Natural killer cell (primary cell): ENCODE measurements at regions of chr20 and their contacts with region 1.

Region 1: GRCh38 chr20:53609491-53610445 is 16.1 kb upstream of the ZNF217 start:
- DNase-seq: peak; percentile 62 to 84
- ATAC-seq: peak; percentile 79 to 87 (median 83)
- H3K4me3 ChIP-seq: peak overlapping the region; percentile 58
- H3K4me3 Mint-ChIP-seq: peak overlapping the region; percentile 92
- H3K27ac ChIP-seq: peak overlapping the region; percentile 92
- H3K27ac Mint-ChIP-seq: peak overlapping the region; percentile 90 to 93
- H3K4me1 ChIP-seq: peaks cover 20% of the 10 kb centered on the region
- H3K4me1 Mint-ChIP-seq: peaks cover 17 to 18% of the 10 kb centered on the region in 2 donors
- H3K27me3 ChIP-seq: no peaks in the 10 kb centered on the region
- H3K27me3 Mint-ChIP-seq: no peaks in the 10 kb centered on the region
- CTCF ChIP-seq: no peak

Region 2: DNA sequence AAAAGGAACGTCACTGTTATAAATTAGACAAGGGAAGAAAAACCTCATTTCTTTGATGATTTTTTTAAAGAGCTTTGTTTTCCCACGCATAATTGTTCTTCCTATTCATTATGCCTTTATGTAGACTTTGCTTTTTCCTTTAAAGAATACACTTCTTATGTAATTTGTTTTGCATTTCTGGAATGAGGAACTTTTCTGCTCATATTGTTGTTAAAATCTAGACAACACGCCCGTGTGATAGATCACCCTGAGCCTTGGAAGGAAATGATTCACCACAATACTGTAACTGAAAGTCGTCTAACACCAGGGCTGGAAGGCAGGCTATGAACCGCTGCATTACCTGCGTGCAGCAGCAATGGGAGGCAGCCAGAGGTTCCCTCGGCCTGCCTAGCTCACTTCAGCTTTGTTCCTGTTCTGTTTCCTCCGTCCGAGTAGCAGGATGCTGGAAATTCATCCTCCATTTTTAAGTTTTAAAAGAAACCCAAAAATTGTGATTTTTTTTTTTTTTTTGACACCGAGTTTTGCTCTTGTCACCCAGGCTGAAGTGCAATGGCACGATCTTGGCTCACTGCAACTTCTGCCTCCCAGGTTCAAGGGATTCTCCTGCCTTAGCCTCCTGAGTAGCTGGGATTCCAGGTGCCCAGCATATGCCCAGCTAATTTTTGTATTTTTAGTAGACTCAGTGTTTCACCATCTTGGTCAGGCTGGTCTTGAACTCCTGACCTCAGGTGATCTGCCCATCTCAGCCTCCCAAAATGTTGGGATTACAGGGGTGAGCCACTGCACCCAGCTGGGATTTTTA is 33.5 kb after region 1 on chr20:
- intact Hi-C with region 1: loop called (anchors 5 kb)
- DNase-seq: peak; percentile 48 to 87
- ATAC-seq: peak; percentile 92 to 97 (median 94)
- H3K4me3 ChIP-seq: peak overlapping the region; percentile 16
- H3K4me3 Mint-ChIP-seq: peak overlapping the region; percentile 90
- H3K27ac ChIP-seq: peak overlapping the region; percentile 62
- H3K27ac Mint-ChIP-seq: peak overlapping the region; percentile 84 to 88
- H3K4me1 ChIP-seq: peaks cover 22% of the 10 kb centered on the region
- H3K4me1 Mint-ChIP-seq: peaks cover 17 to 19% of the 10 kb centered on the region in 2 donors
- H3K27me3 ChIP-seq: no peaks in the 10 kb centered on the region
- H3K27me3 Mint-ChIP-seq: no peaks in the 10 kb centered on the region
- CTCF ChIP-seq: no peak

Region 3: DNA sequence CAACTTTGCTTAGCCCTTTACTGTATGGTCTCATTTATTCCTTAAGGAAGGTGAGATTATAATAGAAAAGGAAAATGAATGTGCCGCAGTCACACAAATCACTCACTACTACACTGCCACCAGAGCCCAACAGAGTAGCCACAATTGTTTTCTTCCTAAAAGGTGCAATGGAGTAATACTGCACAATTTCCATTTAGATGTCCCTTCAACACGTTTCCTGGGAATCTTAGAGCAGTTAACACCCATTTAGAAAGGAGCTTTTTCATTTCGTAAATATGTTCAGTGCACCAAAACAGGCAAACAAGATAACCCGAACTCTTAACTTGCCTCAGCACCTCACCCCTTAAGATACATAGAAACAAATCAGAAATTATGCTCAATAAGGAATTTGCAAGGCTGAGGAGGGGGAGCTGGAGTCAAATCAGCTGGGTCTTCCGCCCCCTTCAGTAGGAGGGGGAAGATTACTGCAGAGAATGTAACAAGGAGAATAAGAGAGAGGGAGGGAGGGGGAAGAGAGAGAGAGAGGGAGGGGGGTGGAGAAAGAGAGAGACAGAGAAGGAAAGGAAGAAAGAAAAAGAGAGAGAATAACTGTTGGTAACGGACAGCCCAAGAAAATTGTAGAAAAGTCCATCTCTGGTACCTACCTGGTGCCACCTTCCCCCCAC is 305.1 kb after region 1 on chr20:
- intact Hi-C with region 1: no loop called
- DNase-seq: no peak
- ATAC-seq: no peak
- H3K4me3 ChIP-seq: peak overlapping the region; percentile 84
- H3K4me3 Mint-ChIP-seq: peak overlapping the region; percentile 99
- H3K27ac ChIP-seq: peak overlapping the region; percentile 63
- H3K27ac Mint-ChIP-seq: peak overlapping the region; percentile 93 to 95
- H3K4me1 ChIP-seq: peaks cover 23% of the 10 kb centered on the region
- H3K4me1 Mint-ChIP-seq: peaks cover 15 to 26% of the 10 kb centered on the region in 2 donors
- H3K27me3 ChIP-seq: no peaks in the 10 kb centered on the region
- H3K27me3 Mint-ChIP-seq: no peaks in the 10 kb centered on the region
- CTCF ChIP-seq: no peak